Activated CD4-positive, alpha-beta memory T cell treated with anti-CD3 and anti-CD28 coated beads for 36 hours (primary cell): ENCODE measurements at regions of chr17 and their contacts with region 1.

Region 1: GRCh38 chr17:28598799-28599310 is at the start of gene SPAG5:
- DNase-seq: peak; percentile 97
- H3K4me3 Mint-ChIP-seq: peak within 1 kb of the TSS; percentile 93
- H3K27ac Mint-ChIP-seq: peak within 1 kb of the TSS; percentile 93
- H3K4me1 Mint-ChIP-seq: peaks cover 21% of the 10 kb centered on the region
- H3K27me3 Mint-ChIP-seq: no peaks in the 10 kb centered on the region
- total RNA-seq, gene SPAG5: 153 to 159 TPM

Region 2: DNA sequence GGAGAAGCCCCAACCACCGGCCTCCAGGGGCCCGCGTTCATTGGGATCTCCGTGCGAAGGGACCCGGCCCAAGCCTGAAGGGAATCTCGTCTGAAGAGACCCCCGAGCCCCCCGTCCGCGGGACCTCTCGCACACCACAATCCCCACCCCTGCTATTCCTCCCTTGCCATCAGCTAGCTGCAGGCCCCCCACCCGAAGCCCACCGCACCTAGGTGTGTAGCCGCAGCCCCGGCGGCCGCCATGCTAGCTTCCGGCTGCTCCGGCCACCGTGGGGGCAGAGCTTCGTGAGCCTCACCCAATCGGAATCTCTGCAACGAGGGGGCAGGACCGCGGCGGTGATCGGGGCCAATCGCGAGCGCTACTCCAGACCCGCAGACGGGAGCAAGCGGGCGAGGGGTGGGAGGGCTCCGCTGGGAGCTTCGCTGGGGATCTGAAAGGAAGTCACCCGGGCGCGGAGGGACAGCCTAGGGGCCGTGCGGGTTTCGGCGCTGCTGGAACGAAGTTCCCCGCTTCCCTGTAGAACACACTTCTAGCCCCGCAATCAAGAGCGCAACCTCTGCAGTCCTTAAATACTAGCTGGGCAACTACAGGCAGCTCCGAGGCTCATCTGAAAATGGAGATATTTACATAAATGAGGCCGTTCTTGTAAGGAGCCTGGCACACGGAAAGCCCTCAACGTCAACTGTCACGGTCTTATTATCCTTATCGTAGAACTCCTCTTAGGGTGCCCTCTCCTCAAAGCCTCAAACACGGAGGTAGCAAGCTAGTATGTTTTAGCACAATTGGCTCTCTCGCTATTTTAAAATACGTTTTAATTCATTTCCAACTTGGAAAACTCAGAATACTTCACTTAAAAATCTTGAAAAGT is 27.4 kb before region 1 on chr17 and contains the start of gene PIGS:
- CTCF ChIA-PET with region 1: interaction called, 5 read pairs
- POLR2A ChIA-PET with region 1: interaction called, 28 read pairs
- intact Hi-C with region 1: no loop called
- DNase-seq: peak; percentile 96
- H3K4me3 Mint-ChIP-seq: peak within 1 kb of the TSS; percentile 96
- H3K27ac Mint-ChIP-seq: peak within 1 kb of the TSS; percentile 89
- H3K4me1 Mint-ChIP-seq: peaks cover 55% of the 10 kb centered on the region
- H3K27me3 Mint-ChIP-seq: no peaks in the 10 kb centered on the region
- total RNA-seq, gene PIGS: 36.6 to 38.6 TPM

Region 3: DNA sequence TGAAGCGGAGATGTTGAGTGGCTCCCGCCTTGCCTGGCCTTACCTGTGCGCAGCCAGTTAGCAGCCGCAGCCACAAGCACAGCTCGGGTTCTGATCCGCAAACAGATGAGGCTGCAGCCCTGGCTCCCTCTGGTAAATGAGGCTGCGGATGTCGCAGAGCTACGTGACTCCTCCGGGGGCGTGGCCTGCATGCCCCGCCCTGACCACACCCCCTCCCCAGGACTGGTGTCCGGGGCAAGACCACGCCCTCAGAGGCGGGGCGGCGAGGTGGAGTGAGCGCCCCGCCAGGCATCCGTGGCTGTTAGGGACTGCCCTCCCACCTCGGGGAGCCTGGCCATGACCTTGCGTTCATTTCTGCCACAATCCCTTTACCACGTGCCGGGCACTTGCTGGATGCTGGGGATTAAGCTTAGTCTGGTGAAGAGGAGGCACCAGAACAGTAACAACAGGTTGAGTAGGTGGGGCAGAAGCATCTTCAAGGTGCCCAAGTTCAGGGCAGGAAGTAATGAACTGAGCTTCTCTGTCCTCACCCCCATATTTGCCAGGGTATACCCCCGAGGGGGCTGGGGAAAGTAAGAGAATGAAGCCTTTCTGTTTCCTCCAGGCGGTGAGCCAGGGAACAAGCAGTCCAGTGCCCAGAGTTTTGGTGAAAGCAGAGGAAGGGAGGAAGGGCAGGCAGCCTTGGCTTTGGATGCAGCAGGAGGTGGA is 21.9 kb before region 1 on chr17 and contains the start of gene ALDOC:
- CTCF ChIA-PET with region 1: interaction called, 5 read pairs
- POLR2A ChIA-PET with region 1: interaction called, 28 read pairs
- intact Hi-C with region 1: loop called (anchors 1 kb)
- DNase-seq: peak; percentile 98
- H3K4me3 Mint-ChIP-seq: peak within 1 kb of the TSS; percentile 78
- H3K27ac Mint-ChIP-seq: peak within 1 kb of the TSS; percentile 81
- H3K4me1 Mint-ChIP-seq: peaks cover 47% of the 10 kb centered on the region
- H3K27me3 Mint-ChIP-seq: no peaks in the 10 kb centered on the region
- total RNA-seq, gene ALDOC: 75.2 to 77.3 TPM

Region 4: GRCh38 chr17:28661635-28662537 is 63.0 kb after region 1 on chr17 and contains the starts of genes SDF2 and SUPT6H:
- CTCF ChIA-PET with region 1: no interaction called
- POLR2A ChIA-PET with region 1: interaction called, 11 read pairs
- intact Hi-C with region 1: loop called (anchors 1 kb)
- DNase-seq: peak; percentile 97
- H3K4me3 Mint-ChIP-seq: peak within 1 kb of the TSS; percentile 97
- H3K27ac Mint-ChIP-seq: peak within 1 kb of the TSS; percentile 97
- H3K4me1 Mint-ChIP-seq: peaks cover 43% of the 10 kb centered on the region
- H3K27me3 Mint-ChIP-seq: no peaks in the 10 kb centered on the region
- total RNA-seq, gene SDF2: 38.4 to 43.5 TPM
- total RNA-seq, gene SUPT6H: 59.4 to 65.9 TPM

Region 5: DNA sequence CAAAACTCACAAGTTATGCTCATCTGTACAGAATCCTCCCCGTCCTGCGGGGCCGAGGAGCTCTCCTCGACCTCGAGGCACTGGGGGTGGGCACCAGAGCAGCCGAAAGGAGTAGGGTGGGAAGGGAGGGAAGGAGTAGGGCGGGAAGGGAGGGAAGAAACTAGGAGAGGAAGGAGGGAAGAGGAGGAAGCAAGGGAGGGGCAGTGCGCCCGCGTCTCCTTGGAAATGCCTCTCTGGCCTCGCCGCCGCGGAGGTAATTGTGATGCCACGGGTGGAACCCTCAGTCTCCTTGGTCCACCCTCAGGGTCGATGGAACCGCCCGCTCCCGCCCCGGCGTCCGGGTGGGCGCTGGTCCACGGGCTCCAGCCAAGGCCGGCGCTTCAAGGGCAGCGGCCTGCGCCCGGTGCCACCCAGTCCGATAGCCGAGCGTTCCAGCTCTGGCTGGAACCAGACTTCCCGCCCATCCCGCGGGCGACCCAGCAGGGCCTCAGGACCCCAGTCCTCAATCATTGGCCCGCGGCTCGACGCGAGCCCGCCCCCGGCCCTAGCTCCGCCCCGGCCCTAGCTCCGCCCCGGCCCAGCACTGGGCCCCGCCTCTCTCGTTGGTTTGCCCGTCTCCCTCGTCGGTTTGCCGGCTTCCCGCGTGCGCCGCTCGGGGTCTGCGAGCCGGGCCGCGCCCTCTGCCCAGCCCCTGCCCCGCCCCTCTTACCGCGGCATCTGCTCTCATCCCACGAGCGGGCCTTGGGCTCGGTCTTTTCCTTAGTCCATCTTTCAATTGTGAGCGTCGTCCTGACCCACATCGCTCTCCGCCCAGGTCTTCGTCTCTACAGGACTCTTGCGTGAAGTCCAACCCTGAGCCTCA is 112.2 kb after region 1 on chr17:
- CTCF ChIA-PET with region 1: no interaction called
- POLR2A ChIA-PET with region 1: interaction called, 7 read pairs
- intact Hi-C with region 1: loop called (anchors 2 kb)
- DNase-seq: peak; percentile 94
- H3K4me3 Mint-ChIP-seq: peak overlapping the region; percentile 73
- H3K27ac Mint-ChIP-seq: peak overlapping the region; percentile 80
- H3K4me1 Mint-ChIP-seq: peaks cover 23% of the 10 kb centered on the region
- H3K27me3 Mint-ChIP-seq: peaks cover 12% of the 10 kb centered on the region